Activated B cell treated with CpG ODN at 0.5 μM for 24 hours (primary cell): ENCODE measurements at regions of chr11 and their contacts with region 1.

Region 1: DNA sequence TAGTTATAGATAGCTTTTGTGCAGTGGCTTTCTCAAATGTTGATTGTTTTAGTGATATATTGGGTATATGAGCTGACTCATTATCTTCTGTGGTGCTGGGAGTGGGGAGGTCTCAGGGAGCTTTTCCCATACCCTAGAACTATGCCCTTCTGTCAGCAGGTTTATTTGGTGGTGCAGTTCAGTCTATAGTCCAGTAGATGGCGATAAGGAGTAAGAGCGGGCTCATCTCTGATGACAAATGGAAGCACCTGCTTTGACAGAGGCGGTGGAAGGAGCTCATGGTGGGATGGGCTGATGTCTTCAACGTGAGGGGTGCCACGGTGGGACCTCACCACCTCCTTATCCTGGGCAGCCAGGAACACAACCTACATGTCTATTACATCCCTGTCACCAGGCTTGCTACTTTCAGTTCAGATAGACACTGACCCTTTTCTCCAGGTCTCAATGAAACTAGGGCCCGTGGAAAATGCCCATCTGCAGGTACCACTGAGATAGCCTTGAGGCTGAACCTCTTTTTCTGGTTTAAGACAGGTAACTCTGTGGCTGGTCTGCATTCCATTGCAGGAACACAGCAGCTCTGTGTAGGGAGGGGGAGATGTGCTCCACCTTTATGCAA is 13.0 kb upstream of the OR6A2 start:
- DNase-seq: no peak
- ATAC-seq: peak; percentile 85
- H3K4me3 Mint-ChIP-seq: no peak overlapping the region
- H3K27ac Mint-ChIP-seq: no peak overlapping the region
- H3K4me1 Mint-ChIP-seq: peaks cover 4% of the 10 kb centered on the region
- H3K27me3 Mint-ChIP-seq: peaks cover 9% of the 10 kb centered on the region
- CTCF ChIP-seq: peak; percentile 95

Region 2: DNA sequence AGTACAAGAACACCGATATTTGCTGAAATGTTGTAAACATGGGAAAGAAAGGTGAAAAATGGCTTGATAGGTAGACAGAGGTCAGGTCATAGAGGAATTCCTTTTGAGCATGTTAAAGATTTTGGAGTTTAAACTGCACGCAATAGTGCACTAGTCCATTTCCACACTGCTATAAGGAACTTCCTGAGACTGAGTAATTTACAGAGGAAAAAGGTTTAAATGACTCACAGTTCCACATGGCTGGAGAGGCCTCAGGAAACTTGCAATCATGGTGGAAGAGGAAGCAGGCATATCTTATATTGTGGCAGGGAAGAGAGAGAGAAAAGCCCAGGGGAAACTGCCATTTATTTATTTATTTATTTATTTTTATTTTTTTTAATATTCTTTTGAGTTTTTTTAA is 38.0 kb after region 1 on chr11:
- CTCF ChIA-PET with region 1: no interaction called
- POLR2A ChIA-PET with region 1: no interaction called
- intact Hi-C with region 1: no loop called
- DNase-seq: no peak
- ATAC-seq: no peak
- H3K4me3 Mint-ChIP-seq: no peak overlapping the region
- H3K27ac Mint-ChIP-seq: no peak overlapping the region
- H3K4me1 Mint-ChIP-seq: no peaks in the 10 kb centered on the region
- H3K27me3 Mint-ChIP-seq: peaks cover 2% of the 10 kb centered on the region
- CTCF ChIP-seq: no peak

Region 3: DNA sequence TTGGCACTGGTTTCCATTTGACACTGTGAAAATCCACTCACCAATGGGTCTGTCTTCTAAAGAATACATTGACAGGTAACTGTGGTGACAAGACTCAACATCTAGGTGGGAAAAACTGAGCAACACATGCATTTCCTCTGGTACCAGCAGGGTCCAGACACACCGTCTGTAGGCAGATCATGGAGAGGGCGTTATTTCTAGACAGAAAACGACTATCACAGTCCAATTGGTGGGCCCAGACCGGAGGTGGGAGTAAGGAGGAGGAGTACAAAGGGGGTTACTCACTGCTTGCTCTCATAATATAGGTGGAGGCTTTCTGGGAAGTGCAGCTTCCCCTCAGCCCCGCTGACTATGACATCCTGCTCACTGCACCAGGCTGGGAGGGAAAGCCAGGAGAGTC is 883.9 kb after region 1 on chr11:
- CTCF ChIA-PET with region 1: no interaction called
- POLR2A ChIA-PET with region 1: no interaction called
- intact Hi-C with region 1: loop called (anchors 1 kb)
- DNase-seq: no peak
- ATAC-seq: no peak
- H3K4me3 Mint-ChIP-seq: no peak overlapping the region
- H3K27ac Mint-ChIP-seq: no peak overlapping the region
- H3K4me1 Mint-ChIP-seq: no peaks in the 10 kb centered on the region
- H3K27me3 Mint-ChIP-seq: peaks cover 21% of the 10 kb centered on the region
- CTCF ChIP-seq: no peak